Activated naive CD4-positive, alpha-beta T cell treated with anti-CD3 and anti-CD28 coated beads for 36 hours (primary cell): ENCODE measurements at regions of chr1 and their contacts with region 1.

Region 1: DNA sequence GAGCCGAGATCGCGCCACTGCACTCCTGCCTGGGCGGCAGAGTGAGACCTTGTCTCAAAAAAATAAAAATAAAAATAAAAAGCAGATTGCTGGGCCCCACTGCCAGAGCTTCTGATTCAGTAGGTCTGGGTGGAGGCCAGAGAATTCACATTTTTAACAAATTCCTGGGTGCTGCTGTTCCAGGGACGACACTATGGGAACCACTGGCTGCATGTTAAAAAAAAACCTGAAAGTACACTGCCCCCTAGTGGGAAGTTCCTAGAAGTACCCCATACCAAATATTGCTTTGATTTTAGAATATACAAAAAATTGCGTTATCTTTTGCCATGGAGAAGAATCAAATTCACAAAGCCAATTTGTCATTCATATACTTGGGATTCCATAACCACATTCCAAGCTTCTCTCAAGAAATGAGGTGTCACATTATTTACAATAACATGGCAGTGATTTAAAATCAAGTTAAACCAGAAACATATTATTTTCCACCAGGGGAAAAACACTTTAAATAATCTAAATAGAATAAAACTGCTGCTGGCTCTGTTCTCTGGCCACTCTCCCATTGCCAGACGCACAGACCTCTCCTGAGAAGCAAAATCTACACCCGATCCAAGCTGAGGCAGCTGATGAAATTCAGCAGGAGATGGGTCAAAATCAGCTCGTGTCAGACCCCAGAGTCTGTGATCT is 27.4 kb downstream of the SYF2 start:
- DNase-seq: no peak
- H3K4me3 Mint-ChIP-seq: no peak overlapping the region
- H3K27ac Mint-ChIP-seq: no peak overlapping the region
- H3K4me1 Mint-ChIP-seq: no peaks in the 10 kb centered on the region
- H3K27me3 Mint-ChIP-seq: no peaks in the 10 kb centered on the region

Region 2: DNA sequence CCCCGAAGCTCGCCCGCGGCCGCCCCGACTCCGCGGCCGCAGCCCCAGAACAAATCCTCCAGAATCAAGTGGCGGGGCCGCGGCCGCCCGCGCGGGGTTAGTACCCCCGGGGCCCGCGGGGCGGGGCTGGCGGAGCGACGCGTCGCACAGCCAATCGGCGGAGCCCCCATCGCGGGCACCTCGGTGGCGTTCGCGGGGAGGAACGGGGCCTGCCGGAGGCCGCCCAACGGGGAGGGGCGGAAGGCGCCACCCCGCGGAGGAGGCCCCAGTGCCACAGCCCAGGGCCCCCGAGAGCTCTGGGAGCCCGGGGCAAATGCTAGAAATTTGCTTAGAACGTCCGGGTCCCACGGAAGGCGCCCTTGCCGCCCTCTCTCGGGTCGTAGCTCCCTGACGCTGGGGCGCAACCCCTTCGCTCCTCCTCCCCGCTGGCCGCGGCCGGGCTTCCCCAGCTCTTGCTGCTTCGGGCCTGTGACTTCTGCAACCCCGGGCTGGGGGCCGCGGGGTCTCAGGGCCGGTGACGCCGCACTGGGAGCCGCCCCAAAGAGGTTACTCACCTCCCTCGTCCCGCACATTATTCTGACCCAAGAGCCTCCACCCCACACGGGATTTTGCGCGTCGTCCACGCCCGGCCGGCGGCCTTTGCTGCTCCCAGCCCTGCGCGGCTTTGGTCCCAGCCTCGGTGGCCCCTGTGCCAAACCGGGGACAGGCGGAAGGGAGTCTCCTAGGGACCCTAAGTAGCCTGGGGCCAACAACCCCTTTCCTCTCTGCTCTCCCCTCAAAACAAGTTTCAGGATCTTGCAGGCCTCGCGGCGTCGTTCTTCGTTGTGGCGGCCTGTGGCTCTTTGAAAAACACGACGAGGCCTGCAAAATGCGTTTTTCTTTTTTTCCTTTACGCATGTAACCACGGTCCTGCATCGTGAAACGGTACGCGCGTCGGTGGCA is 274.5 kb before region 1 on chr1 and contains the start of gene RUNX3:
- CTCF ChIA-PET with region 1: no interaction called
- intact Hi-C with region 1: loop called (anchors 10 kb)
- DNase-seq: peak; percentile 93
- H3K4me3 Mint-ChIP-seq: peak within 1 kb of the TSS; percentile 94
- H3K27ac Mint-ChIP-seq: peak within 1 kb of the TSS; percentile 92
- H3K4me1 Mint-ChIP-seq: peaks cover 66% of the 10 kb centered on the region
- H3K27me3 Mint-ChIP-seq: no peaks in the 10 kb centered on the region
- total RNA-seq, gene RUNX3: 72.3 to 83.8 TPM

Region 3: GRCh38 chr1:25065795-25066238 is 139.1 kb before region 1 on chr1:
- CTCF ChIA-PET with region 1: interaction called, 3 read pairs
- intact Hi-C with region 1: loop called (anchors 10 kb)
- DNase-seq: no peak
- H3K4me3 Mint-ChIP-seq: no peak overlapping the region
- H3K27ac Mint-ChIP-seq: no peak overlapping the region
- H3K4me1 Mint-ChIP-seq: peaks cover 14% of the 10 kb centered on the region
- H3K27me3 Mint-ChIP-seq: no peaks in the 10 kb centered on the region

Region 4: DNA sequence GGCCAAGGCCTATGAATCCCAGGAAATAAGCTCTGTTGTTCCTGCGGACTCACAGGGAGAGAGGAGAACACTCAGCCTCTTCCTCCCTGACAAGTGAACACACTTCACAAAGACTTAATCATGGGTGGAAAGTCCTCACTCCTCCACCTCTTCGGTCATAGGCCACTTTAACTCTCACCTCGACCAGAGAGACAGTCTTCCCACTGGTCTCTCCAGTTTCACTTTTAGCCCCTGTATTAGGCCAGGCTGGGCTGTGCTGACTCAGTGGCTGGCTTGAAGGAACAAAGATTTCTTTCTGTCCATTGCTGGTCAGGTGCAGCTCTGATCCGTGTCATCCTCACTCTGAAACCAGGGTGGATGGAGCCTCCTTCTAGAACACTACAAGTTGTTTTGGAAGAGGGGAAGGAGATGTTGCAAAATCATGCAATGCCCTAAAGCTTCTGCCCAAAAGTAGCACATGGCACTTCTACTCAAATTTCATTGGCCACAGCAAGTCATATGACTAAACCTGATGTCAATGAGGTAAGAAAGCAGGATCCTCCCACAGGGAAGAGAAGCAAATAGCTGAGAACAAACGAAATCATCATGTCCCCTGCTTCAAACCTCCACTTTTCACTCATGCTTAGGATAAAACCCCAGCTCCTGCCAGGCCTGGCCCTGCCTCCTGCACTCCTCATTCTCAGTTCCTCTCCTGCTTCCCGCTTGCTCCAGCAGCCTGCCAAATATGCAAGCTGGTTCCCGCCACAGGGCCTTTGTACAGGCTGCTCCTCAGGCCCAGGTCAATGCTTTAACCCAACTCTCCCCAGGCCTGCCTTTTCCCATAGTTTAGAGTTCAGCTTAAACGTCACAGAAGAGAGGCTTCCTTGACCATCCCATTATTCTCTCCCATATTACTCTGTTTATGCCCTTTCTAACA is 124.4 kb before region 1 on chr1:
- CTCF ChIA-PET with region 1: no interaction called
- intact Hi-C with region 1: no loop called
- DNase-seq: no peak
- H3K4me3 Mint-ChIP-seq: no peak overlapping the region
- H3K27ac Mint-ChIP-seq: no peak overlapping the region
- H3K4me1 Mint-ChIP-seq: no peaks in the 10 kb centered on the region
- H3K27me3 Mint-ChIP-seq: no peaks in the 10 kb centered on the region

Region 5: GRCh38 chr1:25117233-25117823 is 87.6 kb before region 1 on chr1:
- CTCF ChIA-PET with region 1: interaction called, 10 read pairs
- intact Hi-C with region 1: loop called (anchors 2 kb)
- DNase-seq: peak; percentile 46
- H3K4me3 Mint-ChIP-seq: no peak overlapping the region
- H3K27ac Mint-ChIP-seq: no peak overlapping the region
- H3K4me1 Mint-ChIP-seq: peaks cover 32% of the 10 kb centered on the region
- H3K27me3 Mint-ChIP-seq: no peaks in the 10 kb centered on the region

Region 6: DNA sequence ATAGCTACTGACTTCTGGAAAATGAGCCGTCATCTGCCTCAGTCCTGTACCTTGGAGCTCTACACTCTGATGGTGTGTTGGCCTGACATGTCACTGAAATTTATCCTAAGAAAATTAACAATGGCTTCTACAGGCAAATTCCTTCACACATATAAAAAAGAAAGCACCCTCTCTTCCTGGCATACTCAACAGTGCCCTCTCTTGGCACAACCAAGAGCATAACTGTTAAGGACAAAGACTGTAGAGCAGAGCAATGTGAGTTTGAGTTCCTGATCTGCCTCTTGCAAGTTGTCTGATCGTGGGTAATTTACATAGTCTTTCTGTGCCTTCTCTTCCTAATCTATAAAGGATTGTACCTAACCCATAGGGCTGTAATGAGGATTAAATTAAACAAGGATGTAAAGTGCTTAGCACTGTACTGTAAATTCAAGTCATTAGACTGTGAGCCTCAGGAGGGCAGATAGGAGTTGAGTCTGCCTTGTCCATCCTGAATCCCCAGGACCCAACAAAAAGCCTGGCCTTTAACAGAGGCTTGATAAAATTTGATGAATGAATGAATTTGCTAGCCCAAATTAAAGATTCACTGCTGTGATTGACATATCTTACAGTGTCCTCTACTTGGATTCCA is 56.2 kb before region 1 on chr1:
- CTCF ChIA-PET with region 1: no interaction called
- intact Hi-C with region 1: loop called (anchors 2 kb)
- DNase-seq: peak; percentile 60
- H3K4me3 Mint-ChIP-seq: no peak overlapping the region
- H3K27ac Mint-ChIP-seq: no peak overlapping the region
- H3K4me1 Mint-ChIP-seq: no peaks in the 10 kb centered on the region
- H3K27me3 Mint-ChIP-seq: peaks cover 3% of the 10 kb centered on the region